ENCODE measurements at regions of chr4 and their contacts with region 1.

Region 1: GRCh38 chr4:41882625-41883347 is 52.4 kb upstream of the TMEM33 start:
- DNase-seq: peak; percentile 38
- H3K4me3 ChIP-seq: peak overlapping the region; percentile 14
- H3K27ac ChIP-seq: no peak overlapping the region
- H3K4me1 ChIP-seq: no peaks in the 10 kb centered on the region
- H3K27me3 ChIP-seq: peaks cover 48% of the 10 kb centered on the region
- CTCF ChIP-seq: peak; percentile 90

Region 2: GRCh38 chr4:41692717-41693345 is 190.0 kb before region 1 on chr4:
- intact Hi-C with region 1: loop called (anchors 2 kb)
- DNase-seq: peak; percentile 35
- H3K4me3 ChIP-seq: no peak overlapping the region
- H3K27ac ChIP-seq: no peak overlapping the region
- H3K4me1 ChIP-seq: no peaks in the 10 kb centered on the region
- H3K27me3 ChIP-seq: no peaks in the 10 kb centered on the region
- CTCF ChIP-seq: peak; percentile 64

Region 3: GRCh38 chr4:41814565-41814964 is 68.2 kb before region 1 on chr4:
- intact Hi-C with region 1: no loop called
- DNase-seq: no peak
- H3K4me3 ChIP-seq: no peak overlapping the region
- H3K27ac ChIP-seq: no peak overlapping the region
- H3K4me1 ChIP-seq: no peaks in the 10 kb centered on the region
- H3K27me3 ChIP-seq: no peaks in the 10 kb centered on the region
- CTCF ChIP-seq: no peak

Region 4: DNA sequence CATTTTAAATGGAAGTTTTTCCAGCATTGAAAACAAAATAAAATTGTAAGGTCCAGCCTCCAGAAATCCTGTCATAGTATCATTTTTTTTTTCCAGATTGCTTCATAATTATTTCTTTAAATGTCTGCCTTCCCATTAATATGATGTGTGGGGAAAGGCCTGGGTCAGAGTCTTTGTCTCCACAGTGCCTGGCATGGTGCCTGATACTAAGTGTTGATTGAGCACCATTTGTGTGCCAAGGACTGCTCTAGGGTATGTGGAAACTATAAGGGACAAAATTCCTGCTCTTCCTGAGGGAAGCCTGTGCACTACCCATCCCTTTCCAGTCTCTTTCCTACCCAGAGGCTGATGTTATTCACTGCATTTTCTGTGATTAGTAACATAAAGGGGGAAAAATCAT is 322.8 kb after region 1 on chr4:
- intact Hi-C with region 1: no loop called
- DNase-seq: no peak
- H3K4me3 ChIP-seq: no peak overlapping the region
- H3K27ac ChIP-seq: no peak overlapping the region
- H3K4me1 ChIP-seq: no peaks in the 10 kb centered on the region
- H3K27me3 ChIP-seq: no peaks in the 10 kb centered on the region
- CTCF ChIP-seq: no peak

Measured in colonic mucosa (tissue), 4 donors.